Activated T-helper 1 cell treated with anti-CD3 and anti-CD28 coated beads, Interleukin-12 subunit alpha, Interleukin-12 subunit beta, Interleukin-2, Interleukin-4 antibody, amounts not matched to agents 30 ng/mL and 10 ng/mL and 1 ng/mL, durations not matched to agents 14 hours and 24 hours and 36 hours (primary cell): ENCODE measurements at regions of chr12 and their contacts with region 1.

Region 1: GRCh38 chr12:47705566-47706425 is at the start of gene RPAP3:
- DNase-seq: peak; percentile 97
- H3K4me3 Mint-ChIP-seq: peak within 1 kb of the TSS; percentile 97
- H3K27ac Mint-ChIP-seq: peak within 1 kb of the TSS; percentile 98
- H3K4me1 Mint-ChIP-seq: peaks cover 58% of the 10 kb centered on the region
- H3K27me3 Mint-ChIP-seq: no peaks in the 10 kb centered on the region
- total RNA-seq, gene RPAP3: 61.2 and 64.9 TPM in 2 replicates

Region 2: DNA sequence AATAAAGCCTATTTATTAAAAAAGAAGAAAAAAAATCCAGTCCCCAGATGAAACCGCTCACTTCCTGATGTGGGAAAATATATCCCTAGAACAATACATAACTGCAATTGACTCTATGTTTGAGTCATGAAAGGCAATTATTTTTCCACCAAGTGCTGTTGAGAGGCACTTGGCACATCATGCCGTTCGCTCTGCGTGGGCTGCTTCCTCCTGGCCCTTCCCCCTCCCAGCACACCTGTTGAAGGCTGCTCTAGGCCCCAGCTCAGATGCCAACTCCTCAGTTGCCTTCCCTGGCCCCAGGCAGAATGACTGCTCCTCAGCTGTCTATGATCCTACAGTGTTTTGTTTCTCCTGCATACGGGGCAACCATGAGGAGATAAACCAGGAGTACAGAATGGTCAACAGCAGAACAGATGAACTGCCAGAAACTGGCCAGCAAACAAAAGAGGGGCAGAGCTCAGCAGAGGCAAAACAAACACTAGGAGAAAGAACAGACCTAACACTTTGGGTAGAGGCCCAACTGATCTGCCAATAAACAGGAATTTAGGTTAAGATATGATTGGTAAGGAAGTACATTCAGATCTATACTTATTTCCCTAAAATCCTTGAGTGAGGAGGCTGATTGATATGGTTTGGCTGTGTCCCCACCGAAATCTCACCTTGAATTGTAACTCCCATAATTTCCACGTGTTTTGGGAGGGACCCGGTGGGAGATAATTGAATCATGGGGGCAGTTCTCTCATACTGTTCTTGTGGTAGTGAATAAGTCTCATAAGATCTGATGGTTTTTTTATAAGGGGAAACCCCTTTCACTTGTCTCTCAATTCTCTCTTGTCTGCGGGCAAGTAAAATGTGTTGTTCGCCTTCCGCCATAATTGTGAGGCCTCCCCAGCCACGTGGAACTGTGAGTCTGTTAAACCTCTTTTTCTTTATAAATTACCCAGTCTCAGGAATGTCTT is 1495.6 kb before region 1 on chr12:
- intact Hi-C with region 1: loop called (anchors 10 kb)
- DNase-seq: peak; percentile 31
- H3K4me3 Mint-ChIP-seq: peak overlapping the region; percentile 52
- H3K27ac Mint-ChIP-seq: peak overlapping the region; percentile 96
- H3K4me1 Mint-ChIP-seq: peaks cover 64% of the 10 kb centered on the region
- H3K27me3 Mint-ChIP-seq: no peaks in the 10 kb centered on the region

Region 3: GRCh38 chr12:47758834-47759690 is 53.3 kb after region 1 on chr12 and contains the start of gene RAPGEF3:
- intact Hi-C with region 1: loop called (anchors 2 kb)
- DNase-seq: peak; percentile 58
- H3K4me3 Mint-ChIP-seq: peak within 1 kb of the TSS; percentile 75
- H3K27ac Mint-ChIP-seq: no peak within 1 kb of the TSS
- H3K4me1 Mint-ChIP-seq: peaks cover 56% of the 10 kb centered on the region
- H3K27me3 Mint-ChIP-seq: peaks cover 4% of the 10 kb centered on the region
- total RNA-seq, gene RAPGEF3: 4.7 and 6.5 TPM in 2 replicates

Region 4: DNA sequence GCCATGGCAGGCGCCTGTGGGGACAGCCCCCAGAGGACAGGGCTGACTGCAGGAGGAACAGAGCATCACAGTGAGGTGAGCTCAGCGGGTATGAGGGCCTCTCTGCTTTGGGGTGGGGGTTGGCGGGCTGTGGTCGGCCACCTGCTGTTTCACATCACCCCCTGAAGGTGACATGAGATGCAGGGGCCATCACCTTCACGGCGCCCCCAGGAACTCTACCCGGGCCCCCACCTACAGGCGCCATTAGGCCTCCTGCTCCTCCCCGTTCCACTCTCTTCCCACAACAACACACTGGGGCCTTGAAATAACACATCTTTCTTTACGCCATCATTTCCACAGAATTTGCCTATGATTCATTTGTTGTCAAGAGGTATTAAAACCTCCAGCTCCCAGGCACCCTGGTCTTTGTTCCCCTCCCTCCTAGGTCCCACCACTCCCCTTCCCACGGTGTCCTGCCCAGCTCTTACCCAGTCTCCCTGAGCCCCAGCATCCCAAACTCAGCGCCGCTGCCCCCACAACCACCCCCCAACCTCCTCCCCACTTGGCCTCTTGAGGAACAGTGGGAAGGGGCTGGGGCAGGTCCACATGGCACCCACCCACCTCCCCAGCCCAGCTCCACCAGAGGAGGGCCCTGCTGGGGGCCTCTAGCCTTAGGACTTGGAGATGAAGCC is 126.6 kb after region 1 on chr12:
- intact Hi-C with region 1: loop called (anchors 1 kb)
- DNase-seq: no peak
- H3K4me3 Mint-ChIP-seq: peak overlapping the region; percentile 75
- H3K27ac Mint-ChIP-seq: peak overlapping the region; percentile 98
- H3K4me1 Mint-ChIP-seq: peaks cover 93% of the 10 kb centered on the region
- H3K27me3 Mint-ChIP-seq: no peaks in the 10 kb centered on the region

Region 5: GRCh38 chr12:47963340-47964040 is 257.7 kb after region 1 on chr12 and contains the start of gene TMEM106C:
- intact Hi-C with region 1: loop called (anchors 1 kb)
- DNase-seq: peak; percentile 90
- H3K4me3 Mint-ChIP-seq: peak within 1 kb of the TSS; percentile 99
- H3K27ac Mint-ChIP-seq: peak within 1 kb of the TSS; percentile 86
- H3K4me1 Mint-ChIP-seq: peaks cover 41% of the 10 kb centered on the region
- H3K27me3 Mint-ChIP-seq: peaks cover 17% of the 10 kb centered on the region
- total RNA-seq, gene TMEM106C: 139 and 143 TPM in 2 replicates

Region 6: GRCh38 chr12:48716493-48717251 is 1010.9 kb after region 1 on chr12 and contains the start of gene CCNT1:
- intact Hi-C with region 1: loop called (anchors 10 kb)
- DNase-seq: peak; percentile 99
- H3K4me3 Mint-ChIP-seq: peak within 1 kb of the TSS; percentile 90
- H3K27ac Mint-ChIP-seq: peak within 1 kb of the TSS; percentile 93
- H3K4me1 Mint-ChIP-seq: peaks cover 43% of the 10 kb centered on the region
- H3K27me3 Mint-ChIP-seq: no peaks in the 10 kb centered on the region
- total RNA-seq, gene CCNT1: 67.2 and 67.7 TPM in 2 replicates